PC-9 (cell line): ENCODE measurements at regions of chr3 and their contacts with region 1.

Region 1: DNA sequence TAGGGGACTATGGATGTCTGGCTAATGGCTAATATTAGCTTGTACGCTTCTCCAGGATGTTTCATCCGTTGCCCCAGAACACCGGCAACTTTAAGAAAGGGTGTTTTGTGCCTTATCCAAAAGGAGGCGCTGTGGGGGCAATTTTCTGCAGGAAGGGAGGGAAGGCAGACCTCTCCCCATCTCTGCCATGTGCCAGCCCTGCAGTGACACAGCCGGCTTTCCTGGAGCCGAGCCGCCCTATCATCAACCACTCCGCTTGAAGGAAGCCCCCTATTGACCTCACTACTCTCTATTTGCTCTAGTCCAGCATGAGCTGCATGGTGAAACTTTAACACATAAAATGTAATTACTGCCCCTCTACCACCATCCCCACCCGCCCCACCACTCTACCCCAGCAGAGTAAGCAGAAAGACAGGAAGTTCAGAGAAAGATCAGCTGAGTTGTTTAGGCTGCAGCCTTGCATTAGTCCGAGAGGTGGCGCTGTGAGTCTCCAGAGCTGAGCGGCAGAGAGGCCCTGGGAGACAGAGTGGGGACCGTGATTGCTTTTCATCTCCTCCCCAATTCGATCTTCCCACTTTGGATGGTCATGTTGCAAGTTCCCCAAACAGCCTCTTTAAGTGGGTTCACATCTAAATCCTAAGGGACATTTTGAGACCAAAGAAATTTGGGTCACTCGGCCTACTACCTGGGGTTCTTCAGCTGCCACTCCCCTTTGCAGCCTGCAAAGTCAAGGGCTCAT is 24.5 kb upstream of the RAD18 start:
- DNase-seq: peak in 1 of 2 experiments; percentile 55
- H3K4me3 ChIP-seq: no peak overlapping the region
- H3K27ac ChIP-seq: no peak overlapping the region
- H3K4me1 ChIP-seq: no peaks in the 10 kb centered on the region
- H3K27me3 ChIP-seq: no peaks in the 10 kb centered on the region
- CTCF ChIP-seq: peak; percentile 83

Region 2: DNA sequence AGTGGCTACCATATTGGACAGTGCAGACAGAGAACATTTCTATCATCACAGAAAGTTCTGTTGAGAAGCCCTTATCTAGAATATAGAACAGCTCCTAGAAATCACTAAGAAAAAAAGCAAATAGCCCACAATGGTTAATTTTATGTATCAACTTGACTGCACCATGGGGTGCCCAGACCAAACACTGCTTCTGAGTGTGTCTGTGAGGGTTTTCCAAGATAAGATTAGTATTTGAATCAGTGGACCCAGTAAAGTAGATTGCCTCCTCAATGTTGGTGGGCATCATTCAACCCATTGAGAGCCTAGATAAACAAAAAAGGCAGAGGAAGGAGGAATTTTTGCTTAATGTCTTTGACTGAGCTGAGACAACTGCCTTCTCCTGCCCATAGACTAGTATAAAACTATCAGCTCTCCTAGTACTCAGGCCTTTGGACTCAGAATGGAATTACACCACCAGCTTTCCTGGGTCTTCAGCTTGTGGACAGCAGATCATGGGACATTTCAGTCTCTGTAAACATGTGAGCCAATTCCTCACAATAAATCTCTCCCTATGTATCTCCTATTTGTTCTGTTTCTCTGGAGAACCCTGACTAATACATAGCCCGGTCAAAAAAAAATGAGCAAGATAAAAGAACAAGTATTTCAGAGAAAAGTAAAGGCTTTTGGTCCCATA is 162.5 kb before region 1 on chr3:
- CTCF ChIA-PET with region 1: interaction called, 11 read pairs
- POLR2A ChIA-PET with region 1: no interaction called
- intact Hi-C with region 1: no loop called
- DNase-seq: no peak
- H3K4me3 ChIP-seq: no peak overlapping the region
- H3K27ac ChIP-seq: no peak overlapping the region
- H3K4me1 ChIP-seq: peaks cover 11% of the 10 kb centered on the region
- H3K27me3 ChIP-seq: no peaks in the 10 kb centered on the region
- CTCF ChIP-seq: no peak

Region 3: GRCh38 chr3:9067352-9067975 is 79.7 kb after region 1 on chr3:
- CTCF ChIA-PET with region 1: no interaction called
- POLR2A ChIA-PET with region 1: no interaction called
- intact Hi-C with region 1: loop called (anchors 2 kb)
- DNase-seq: peak in 1 of 2 experiments; percentile 33
- H3K4me3 ChIP-seq: no peak overlapping the region
- H3K27ac ChIP-seq: no peak overlapping the region
- H3K4me1 ChIP-seq: no peaks in the 10 kb centered on the region
- H3K27me3 ChIP-seq: no peaks in the 10 kb centered on the region
- CTCF ChIP-seq: peak; percentile 96

Region 4: DNA sequence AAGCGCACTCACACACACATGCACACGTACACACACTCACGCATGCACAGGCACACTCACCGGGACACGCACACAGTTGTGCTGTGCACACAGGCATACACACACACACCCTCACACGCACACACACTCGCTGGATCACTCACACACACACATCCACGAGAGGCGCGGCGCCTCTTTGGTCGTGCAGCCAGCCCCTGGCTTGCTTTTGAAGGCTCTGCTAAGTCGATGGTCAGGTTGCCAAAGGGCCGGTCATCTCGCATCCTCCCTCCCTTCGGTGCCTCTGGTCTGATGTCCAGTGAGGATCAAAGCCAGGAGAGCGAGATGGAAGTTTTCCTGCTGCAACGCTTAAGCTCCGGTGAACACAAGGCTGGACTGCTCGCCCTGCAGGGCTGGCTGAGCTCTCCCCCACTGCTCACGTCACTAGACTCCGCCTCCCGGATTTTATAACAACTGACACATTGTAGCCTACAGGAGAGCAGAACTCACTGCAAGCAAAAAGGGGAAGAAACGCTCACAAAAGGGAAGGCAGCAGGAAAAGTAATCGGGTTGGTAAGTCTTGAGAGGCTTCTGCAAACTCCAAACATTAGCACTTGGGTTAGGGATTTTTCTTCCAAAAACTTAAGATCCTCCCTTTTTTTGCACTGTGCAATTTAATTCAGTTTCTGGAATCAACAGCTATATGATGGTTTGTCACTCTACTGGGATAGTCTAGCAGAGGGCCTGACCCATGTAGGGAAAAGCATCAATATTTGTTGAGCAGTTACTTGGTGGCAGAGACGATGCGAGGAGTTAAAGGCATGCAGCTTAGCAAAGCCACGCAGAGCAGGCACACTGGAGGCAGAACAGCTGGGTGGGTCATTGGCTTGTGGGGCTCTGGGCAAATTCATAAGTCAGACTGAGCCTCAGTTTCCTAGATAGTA is 261.7 kb after region 1 on chr3 and contains the start of gene SRGAP3:
- CTCF ChIA-PET with region 1: interaction called, 20 read pairs
- POLR2A ChIA-PET with region 1: no interaction called
- intact Hi-C with region 1: no loop called
- DNase-seq: peak; percentile 80 to 88
- H3K4me3 ChIP-seq: peak within 1 kb of the TSS; percentile 62
- H3K27ac ChIP-seq: no peak within 1 kb of the TSS
- H3K4me1 ChIP-seq: peaks cover 30% of the 10 kb centered on the region
- H3K27me3 ChIP-seq: no peaks in the 10 kb centered on the region
- CTCF ChIP-seq: 0 out of 2 replicates have a peak, but pooled peaks have one; percentile 27
- total RNA-seq, gene SRGAP3: 12.9 and 17.5 TPM in 2 replicates

Region 5: DNA sequence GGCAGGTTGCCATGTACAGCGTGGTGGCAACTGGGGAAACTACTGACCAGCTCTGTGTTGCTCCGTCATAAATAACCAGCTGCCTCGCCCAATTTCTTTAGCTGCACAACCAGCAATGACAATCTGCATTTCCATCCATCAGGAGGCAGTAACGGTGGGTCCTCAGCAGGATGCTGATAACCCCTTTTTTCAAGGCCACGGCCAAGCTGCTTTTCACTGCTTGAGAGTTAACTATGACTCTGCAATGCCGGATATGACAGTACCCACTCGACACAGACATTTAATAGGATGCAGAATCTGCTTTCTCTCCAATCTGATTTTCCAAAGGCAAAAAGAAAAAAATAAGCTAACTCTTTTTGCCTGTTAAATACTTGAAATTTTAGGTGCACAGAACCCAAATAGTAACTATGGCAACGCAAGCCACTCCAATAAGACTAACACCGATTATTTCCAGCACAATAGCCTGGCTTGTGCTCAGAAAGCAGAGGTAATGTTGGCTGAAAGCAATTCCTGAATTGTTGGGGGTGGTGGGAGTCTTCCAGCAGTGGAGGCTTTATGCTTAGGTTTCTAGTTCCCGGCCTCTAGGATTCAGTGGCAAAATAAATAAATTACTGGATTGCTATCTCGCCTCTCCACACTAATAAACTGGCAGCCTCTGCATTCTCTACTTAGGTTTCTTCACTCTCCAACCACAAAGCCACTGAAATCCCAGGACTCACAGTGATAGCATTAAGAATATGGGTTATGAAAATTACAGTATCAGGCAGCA is 292.8 kb after region 1 on chr3:
- CTCF ChIA-PET with region 1: interaction called, 14 read pairs
- POLR2A ChIA-PET with region 1: no interaction called
- intact Hi-C with region 1: no loop called
- DNase-seq: no peak
- H3K4me3 ChIP-seq: no peak overlapping the region
- H3K27ac ChIP-seq: no peak overlapping the region
- H3K4me1 ChIP-seq: no peaks in the 10 kb centered on the region
- H3K27me3 ChIP-seq: no peaks in the 10 kb centered on the region
- CTCF ChIP-seq: no peak

Region 6: DNA sequence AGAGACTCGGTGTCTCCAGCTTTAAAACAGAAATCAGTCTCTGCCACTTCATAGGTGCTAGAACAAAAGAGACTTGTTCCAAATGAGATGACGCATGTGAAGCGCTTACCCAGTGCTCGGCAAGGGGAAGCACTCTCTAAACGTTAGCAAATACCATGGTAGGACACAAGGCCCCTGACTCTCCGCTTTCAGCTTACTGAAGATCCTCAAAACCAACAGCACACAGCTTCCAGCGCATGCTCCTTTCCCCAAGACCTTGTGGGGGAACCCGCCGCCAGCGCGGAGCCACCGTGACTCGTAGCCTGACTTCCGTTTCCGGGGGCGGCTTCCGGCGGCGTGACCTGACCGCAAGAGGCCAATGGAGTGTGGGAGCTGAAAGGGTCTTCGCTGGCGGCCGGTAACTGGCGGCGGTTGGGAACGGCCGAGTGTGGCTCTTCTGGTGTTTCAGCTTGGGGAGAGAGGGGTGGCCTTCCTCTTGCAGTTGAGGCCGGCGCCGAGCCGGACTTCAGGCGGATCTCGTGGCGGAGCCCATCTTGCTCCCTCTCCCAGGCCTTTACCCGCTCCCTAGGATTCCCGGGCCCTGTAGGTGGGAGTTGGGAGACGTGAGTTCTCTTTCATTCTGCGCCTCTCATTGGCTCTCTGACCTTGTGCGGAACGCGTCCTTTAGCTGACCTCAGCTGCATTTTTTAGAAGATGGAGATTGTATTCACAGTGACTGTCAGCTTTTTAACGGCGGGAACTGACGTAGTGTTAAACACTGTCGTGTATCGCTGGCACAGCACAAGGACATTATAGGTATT is 375.1 kb after region 1 on chr3 and contains the start of gene THUMPD3:
- CTCF ChIA-PET with region 1: no interaction called
- POLR2A ChIA-PET with region 1: interaction called, 27 read pairs
- intact Hi-C with region 1: no loop called
- DNase-seq: peak; percentile 78 to 83
- H3K4me3 ChIP-seq: peak within 1 kb of the TSS; percentile 81
- H3K27ac ChIP-seq: peak within 1 kb of the TSS; percentile 78
- H3K4me1 ChIP-seq: peaks cover 22% of the 10 kb centered on the region; the same call in 1 of the 2 replicates
- H3K27me3 ChIP-seq: no peaks in the 10 kb centered on the region
- CTCF ChIP-seq: 0 out of 2 replicates have a peak, but pooled peaks have one; percentile 8
- total RNA-seq, gene THUMPD3: 48.8 and 49.9 TPM in 2 replicates

Region 7: GRCh38 chr3:9536212-9536611 is 548.4 kb after region 1 on chr3:
- CTCF ChIA-PET with region 1: no interaction called
- POLR2A ChIA-PET with region 1: no interaction called
- intact Hi-C with region 1: no loop called
- DNase-seq: no peak
- H3K4me3 ChIP-seq: no peak overlapping the region
- H3K27ac ChIP-seq: no peak overlapping the region
- H3K4me1 ChIP-seq: no peaks in the 10 kb centered on the region
- H3K27me3 ChIP-seq: peaks cover 83% of the 10 kb centered on the region
- CTCF ChIP-seq: no peak